Right ventricle myocardium inferior (tissue), 1 donor: ENCODE measurements at regions of chr11 and their contacts with region 1.

Region 1: DNA sequence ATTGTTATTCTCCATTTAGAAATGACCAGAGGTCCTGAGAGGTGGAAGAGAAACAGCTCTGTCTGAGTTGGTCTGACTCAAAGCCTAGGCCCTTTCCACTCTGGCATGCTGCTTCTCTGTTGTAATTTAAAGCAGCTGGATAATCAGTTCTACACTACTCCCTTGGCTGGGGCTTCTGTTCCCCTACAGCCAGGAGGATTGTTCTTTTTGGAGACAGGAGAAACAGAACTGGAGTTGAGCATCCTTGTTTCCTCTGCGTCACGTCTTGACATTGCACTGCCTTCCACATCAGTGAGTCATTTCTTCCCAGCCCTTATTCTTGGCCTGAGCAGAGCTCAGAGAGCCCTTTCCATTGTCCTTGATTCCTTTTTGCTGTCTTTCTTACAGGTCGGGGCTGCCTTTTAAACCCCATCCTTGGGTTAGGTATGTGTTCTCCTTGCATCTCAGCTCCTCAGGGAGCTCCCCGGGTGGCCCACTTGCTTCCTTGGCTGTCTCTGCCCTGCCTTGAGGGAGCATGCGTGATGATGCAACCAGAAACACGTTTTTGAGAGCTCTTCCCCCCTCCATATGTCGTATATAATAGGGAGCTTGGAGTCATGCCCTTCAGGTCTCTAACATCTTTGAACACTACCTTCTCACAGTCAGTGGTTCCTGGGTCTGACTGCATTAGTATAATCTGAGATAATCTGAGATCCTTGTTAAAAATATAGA is 35.7 kb downstream of the CYB5R2 start:
- DNase-seq: no peak
- ATAC-seq: peak; percentile 91

Region 2: GRCh38 chr11:6576471-6577373 is 1060.9 kb before region 1 on chr11:
- intact Hi-C with region 1: no loop called
- DNase-seq: no peak
- ATAC-seq: peak; percentile 73

Region 3: GRCh38 chr11:7577291-7578190 is 60.1 kb before region 1 on chr11:
- intact Hi-C with region 1: loop called (anchors 5 kb)
- DNase-seq: no peak
- ATAC-seq: peak; percentile 61

Region 4: DNA sequence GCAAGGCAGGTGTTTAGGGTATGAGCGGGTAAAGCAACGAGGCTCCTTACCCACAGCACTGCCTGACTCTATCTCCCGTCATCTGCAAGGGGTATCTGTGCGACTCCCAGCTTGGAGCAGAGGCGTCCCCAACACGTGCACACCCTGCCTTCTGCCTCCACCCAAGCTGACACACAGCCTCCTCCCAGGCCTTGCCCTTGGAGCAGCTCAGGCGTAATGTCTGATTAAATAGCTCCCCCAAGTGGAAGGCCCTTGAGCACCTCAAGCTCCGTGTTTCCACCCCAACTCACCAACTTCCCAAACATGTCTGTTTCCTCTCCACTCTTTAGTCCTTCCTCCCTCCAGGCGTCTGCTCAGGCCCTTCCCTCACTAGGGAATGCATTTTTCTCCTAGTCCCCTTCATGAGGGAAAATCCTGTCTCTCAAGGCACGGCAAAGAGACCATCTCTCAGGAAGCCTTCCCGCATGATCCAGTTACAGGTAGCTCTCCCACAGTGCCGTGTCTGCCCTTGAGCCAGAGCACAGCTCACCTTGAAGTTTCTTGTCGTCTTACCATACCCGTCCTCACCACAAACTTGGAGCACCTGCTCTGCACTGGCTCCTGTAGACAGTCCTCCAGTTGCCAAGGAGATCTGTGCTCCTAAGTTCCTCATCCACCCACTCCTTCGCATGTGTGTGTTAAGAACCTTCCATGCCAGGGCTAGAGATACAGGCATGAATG is 19.9 kb after region 1 on chr11:
- intact Hi-C with region 1: no loop called
- DNase-seq: peak; percentile 77
- ATAC-seq: peak; percentile 92

Region 5: GRCh38 chr11:7775689-7776088 is 138.1 kb after region 1 on chr11:
- intact Hi-C with region 1: no loop called
- DNase-seq: no peak
- ATAC-seq: no peak

Region 6: GRCh38 chr11:7826316-7826715 is 188.7 kb after region 1 on chr11:
- intact Hi-C with region 1: no loop called
- DNase-seq: no peak
- ATAC-seq: no peak